ENCODE measurements at regions of chr1 and their contacts with region 1.

Region 1: GRCh38 chr1:93437976-93438605 is 9.8 kb upstream of the FNBP1L start:
- DNase-seq: peak in 1 of 2 donors; percentile 75
- H3K4me3 ChIP-seq: no peak overlapping the region
- H3K27ac ChIP-seq: no peak overlapping the region
- H3K4me1 ChIP-seq: peaks cover 0 to 7% (median 0%) of the 10 kb centered on the region in 4 donors
- H3K27me3 ChIP-seq: peaks cover 0 to 11% (median 0%) of the 10 kb centered on the region in 3 donors
- CTCF ChIP-seq: peak in 4 of 7 experiments; percentile 28 to 69 (median 64)
- EP300 ChIP-seq: no peak
- POLR2A ChIP-seq: no peak

Region 2: GRCh38 chr1:93304716-93305138 is 133.4 kb before region 1 on chr1:
- intact Hi-C with region 1: loop called (anchors 10 kb)
- DNase-seq: peak; percentile 47 to 86
- H3K4me3 ChIP-seq: no peak overlapping the region
- H3K27ac ChIP-seq: no peak overlapping the region
- H3K4me1 ChIP-seq: peaks cover 0 to 8% (median 3%) of the 10 kb centered on the region in 4 donors
- H3K27me3 ChIP-seq: no peaks in the 10 kb centered on the region
- CTCF ChIP-seq: peak in 5 of 7 experiments; percentile 55 to 93 (median 89)
- EP300 ChIP-seq: no peak
- POLR2A ChIP-seq: no peak

Region 3: GRCh38 chr1:93579891-93580290 is 141.8 kb after region 1 on chr1:
- intact Hi-C with region 1: no loop called
- DNase-seq: peak; percentile 50 to 68
- H3K4me3 ChIP-seq: no peak overlapping the region
- H3K27ac ChIP-seq: peak overlapping the region; percentile 47 to 90 (median 70)
- H3K4me1 ChIP-seq: peaks cover 34 to 91% (median 68%) of the 10 kb centered on the region in 4 donors
- H3K27me3 ChIP-seq: no peaks in the 10 kb centered on the region
- CTCF ChIP-seq: no peak
- EP300 ChIP-seq: no peak
- POLR2A ChIP-seq: no peak

Region 4: GRCh38 chr1:93629099-93630059 is 191.3 kb after region 1 on chr1:
- intact Hi-C with region 1: loop called (anchors 5 kb)
- DNase-seq: peak in 1 of 2 donors; percentile 88
- H3K4me3 ChIP-seq: no peak overlapping the region
- H3K27ac ChIP-seq: peak overlapping the region in 1 of 5 donors; percentile 19
- H3K4me1 ChIP-seq: peaks cover 0 to 26% (median 15%) of the 10 kb centered on the region in 4 donors
- H3K27me3 ChIP-seq: no peaks in the 10 kb centered on the region
- CTCF ChIP-seq: peak in 5 of 7 experiments; percentile 59 to 84 (median 81)
- EP300 ChIP-seq: no peak
- POLR2A ChIP-seq: no peak

Region 5: GRCh38 chr1:93814059-93814794 is 376.1 kb after region 1 on chr1:
- intact Hi-C with region 1: loop called (anchors 10 kb)
- DNase-seq: peak; percentile 68 to 91
- H3K4me3 ChIP-seq: no peak overlapping the region
- H3K27ac ChIP-seq: no peak overlapping the region
- H3K4me1 ChIP-seq: peaks cover 0 to 29% (median 11%) of the 10 kb centered on the region in 4 donors
- H3K27me3 ChIP-seq: no peaks in the 10 kb centered on the region
- CTCF ChIP-seq: peak in 5 of 7 experiments; percentile 89 to 98 (median 93)
- EP300 ChIP-seq: no peak
- POLR2A ChIP-seq: no peak

Measured in stomach (tissue), 19 donors.